ENCODE measurements at regions of chr3 and their contacts with region 1.

Region 1: DNA sequence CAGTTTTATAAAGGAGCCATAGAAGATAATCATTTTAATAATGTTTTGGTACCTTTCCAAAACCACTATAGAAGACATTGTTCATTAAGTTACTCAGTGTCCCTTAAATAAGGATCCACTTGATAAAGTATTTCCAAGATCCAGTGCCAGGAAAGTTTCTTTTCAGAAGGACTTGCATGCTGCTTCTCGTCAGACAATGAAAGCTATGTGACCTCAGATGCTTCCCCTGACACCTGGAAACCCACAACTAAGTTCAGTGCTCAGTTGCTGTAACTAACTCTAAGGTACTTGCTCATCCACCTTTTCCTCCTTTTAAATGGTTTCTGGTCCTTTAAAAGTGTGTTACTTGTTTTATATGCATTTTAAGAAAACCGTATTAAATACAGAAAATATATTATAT is 7.3 kb downstream of the SSR3 start:
- DNase-seq: no peak
- H3K4me3 ChIP-seq: peak overlapping the region in 3 of 4 donors; percentile 3 to 33 (median 23)
- H3K27ac ChIP-seq: peak overlapping the region; percentile 73 to 88 (median 82)
- H3K4me1 ChIP-seq: peaks cover 65 to 100% (median 96%) of the 10 kb centered on the region in 4 donors
- H3K27me3 ChIP-seq: no peaks in the 10 kb centered on the region
- CTCF ChIP-seq: no peak
- EP300 ChIP-seq: no peak
- POLR2A ChIP-seq: no peak

Region 2: DNA sequence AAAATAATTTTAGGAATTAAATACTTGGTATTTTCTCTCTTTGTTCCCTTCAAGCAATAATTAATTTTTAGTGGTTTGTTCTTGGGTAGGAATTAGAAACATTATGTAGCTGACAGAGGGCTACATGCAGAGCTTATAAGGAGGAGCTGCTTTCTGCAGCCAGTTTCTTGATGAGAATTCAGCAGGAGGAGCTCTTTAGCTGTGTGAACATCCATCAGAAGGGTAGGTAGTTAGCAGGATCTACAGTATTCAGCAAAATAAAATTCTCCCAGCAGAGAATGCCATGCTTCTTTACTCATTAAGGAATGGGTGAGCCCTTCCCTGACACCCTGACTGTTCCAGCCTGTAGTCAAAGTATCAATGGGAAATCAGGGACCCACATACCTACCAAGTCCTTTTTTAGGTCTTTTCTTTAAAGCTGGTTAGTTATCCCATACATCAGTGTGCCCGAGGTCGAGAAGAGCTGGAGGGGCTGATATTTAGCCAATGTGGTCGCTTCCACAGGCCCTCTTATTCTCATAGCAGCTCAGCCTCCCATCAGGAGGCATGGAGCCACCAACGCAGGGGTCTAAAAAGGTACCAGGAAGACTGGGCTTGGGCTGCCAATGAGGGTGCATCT is 373.3 kb before region 1 on chr3:
- intact Hi-C with region 1: no loop called
- DNase-seq: peak; percentile 62
- H3K4me3 ChIP-seq: no peak overlapping the region
- H3K27ac ChIP-seq: no peak overlapping the region
- H3K4me1 ChIP-seq: peaks cover 0 to 15% (median 8%) of the 10 kb centered on the region in 4 donors
- H3K27me3 ChIP-seq: no peaks in the 10 kb centered on the region
- CTCF ChIP-seq: peak in 2 of 3 experiments; percentile 34 to 46
- EP300 ChIP-seq: no peak
- POLR2A ChIP-seq: no peak

Region 3: DNA sequence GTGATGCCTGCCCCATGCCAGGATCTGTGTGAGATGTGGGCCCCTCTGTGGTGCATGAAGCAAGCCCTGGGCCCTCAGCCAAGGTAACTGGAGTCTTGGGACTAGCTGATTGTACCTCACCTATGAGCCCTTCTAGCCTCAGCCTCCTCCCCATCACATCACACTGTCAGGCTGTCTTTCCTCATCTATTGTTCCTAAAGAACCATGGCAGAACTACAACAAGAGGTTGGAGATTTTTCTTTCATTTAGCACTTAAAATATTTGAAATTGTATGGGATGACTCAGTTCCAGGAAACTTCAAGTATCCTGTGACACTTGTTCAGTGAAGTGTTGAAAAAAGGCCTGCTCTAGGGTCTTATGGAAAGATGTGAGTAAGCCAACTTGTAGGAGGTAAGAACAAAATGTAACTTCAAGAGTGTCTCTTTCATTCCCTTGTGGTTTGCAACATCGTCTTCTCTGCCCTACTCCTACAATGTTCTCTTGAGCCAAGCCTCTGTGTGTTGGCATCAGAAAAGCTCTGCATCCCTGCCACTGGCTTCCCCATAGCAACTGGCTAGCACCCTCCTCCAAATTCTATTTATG is 68.0 kb after region 1 on chr3:
- intact Hi-C with region 1: no loop called
- DNase-seq: no peak
- H3K4me3 ChIP-seq: no peak overlapping the region
- H3K27ac ChIP-seq: peak overlapping the region in 3 of 4 donors; percentile 16 to 35 (median 23)
- H3K4me1 ChIP-seq: peaks cover 0 to 11% (median 0%) of the 10 kb centered on the region in 4 donors
- H3K27me3 ChIP-seq: no peaks in the 10 kb centered on the region
- CTCF ChIP-seq: no peak
- EP300 ChIP-seq: no peak
- POLR2A ChIP-seq: no peak

Region 4: DNA sequence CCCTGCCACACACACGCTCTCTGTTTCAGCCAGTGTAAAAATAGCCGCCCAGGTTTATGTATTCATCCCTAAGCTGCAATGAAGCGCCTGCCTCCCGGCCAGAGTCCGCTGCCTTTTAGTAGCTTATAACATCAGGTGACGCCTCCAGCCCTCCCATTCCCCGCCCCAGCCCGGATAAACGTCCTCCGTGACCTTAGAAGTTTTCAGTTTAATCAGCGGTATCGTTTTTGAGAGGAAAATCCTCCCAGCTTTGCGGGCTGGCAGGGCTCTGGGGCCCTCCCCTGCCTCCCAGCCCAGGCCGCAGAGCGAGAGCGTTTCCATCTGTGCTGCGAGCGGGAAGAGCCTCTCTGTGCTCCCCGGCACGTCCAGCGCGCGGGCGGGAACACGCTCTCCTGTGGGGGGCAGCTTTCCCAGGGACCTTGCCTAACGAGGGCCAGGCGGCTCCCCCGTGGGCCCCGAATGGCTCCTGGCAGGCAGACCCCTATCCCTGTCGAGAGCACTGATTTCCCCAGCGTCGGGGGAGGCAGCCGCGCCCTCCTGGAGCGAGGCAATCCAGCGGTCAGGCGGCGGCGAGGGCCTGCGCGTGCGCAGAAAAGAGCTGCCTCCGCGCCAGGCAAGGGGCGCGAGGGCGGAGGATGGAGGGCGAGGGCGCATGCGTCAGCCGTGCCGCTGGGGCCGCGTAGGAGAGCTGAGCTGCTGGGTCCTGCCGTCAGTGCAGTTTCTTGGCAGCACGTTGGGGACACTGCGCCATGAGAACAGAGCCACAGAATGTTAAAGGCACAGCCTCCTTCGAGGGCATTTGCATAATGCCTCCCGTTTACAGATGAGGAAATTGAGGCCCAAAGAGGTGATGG is 541.2 kb after region 1 on chr3:
- intact Hi-C with region 1: loop called (anchors 5 kb)
- DNase-seq: peak; percentile 98
- H3K4me3 ChIP-seq: peak overlapping the region; percentile 65 to 81 (median 72)
- H3K27ac ChIP-seq: peak overlapping the region; percentile 98 to 99 (median 98)
- H3K4me1 ChIP-seq: peaks cover 41 to 63% (median 53%) of the 10 kb centered on the region in 4 donors
- H3K27me3 ChIP-seq: no peaks in the 10 kb centered on the region
- CTCF ChIP-seq: no peak
- EP300 ChIP-seq: peak; percentile 87
- POLR2A ChIP-seq: peak; percentile 89

Region 5: GRCh38 chr3:157159762-157160657 is 612.4 kb after region 1 on chr3 and contains the start of gene CCNL1:
- intact Hi-C with region 1: loop called (anchors 10 kb)
- DNase-seq: peak; percentile 99
- H3K4me3 ChIP-seq: peak within 1 kb of the TSS; percentile 89 to 98 (median 98)
- H3K27ac ChIP-seq: peak within 1 kb of the TSS; percentile 99 to 100 (median 100)
- H3K4me1 ChIP-seq: peaks cover 45 to 53% (median 51%) of the 10 kb centered on the region in 4 donors
- H3K27me3 ChIP-seq: no peaks in the 10 kb centered on the region
- CTCF ChIP-seq: peak in 1 of 3 experiments; percentile 18
- EP300 ChIP-seq: peak; percentile 82
- POLR2A ChIP-seq: peak; percentile 99
- total RNA-seq, gene CCNL1: 45.3 to 180 (median 77.3) TPM